Thyroid gland (tissue), 4 donors: ENCODE measurements at regions of chrX and their contacts with region 1.

Region 1: GRCh38 chrX:103918581-103919269 is 43.7 kb upstream of the TMSB15B start:
- DNase-seq: peak; percentile 28 to 38
- H3K4me3 ChIP-seq: peak overlapping the region in 2 of 3 donors; percentile 27
- H3K27ac ChIP-seq: peak overlapping the region in 2 of 3 donors; percentile 52 to 56
- H3K4me1 ChIP-seq: no peaks in the 10 kb centered on the region
- H3K27me3 ChIP-seq: no peaks in the 10 kb centered on the region
- CTCF ChIP-seq: no peak
- POLR2A ChIP-seq: no peak

Region 2: DNA sequence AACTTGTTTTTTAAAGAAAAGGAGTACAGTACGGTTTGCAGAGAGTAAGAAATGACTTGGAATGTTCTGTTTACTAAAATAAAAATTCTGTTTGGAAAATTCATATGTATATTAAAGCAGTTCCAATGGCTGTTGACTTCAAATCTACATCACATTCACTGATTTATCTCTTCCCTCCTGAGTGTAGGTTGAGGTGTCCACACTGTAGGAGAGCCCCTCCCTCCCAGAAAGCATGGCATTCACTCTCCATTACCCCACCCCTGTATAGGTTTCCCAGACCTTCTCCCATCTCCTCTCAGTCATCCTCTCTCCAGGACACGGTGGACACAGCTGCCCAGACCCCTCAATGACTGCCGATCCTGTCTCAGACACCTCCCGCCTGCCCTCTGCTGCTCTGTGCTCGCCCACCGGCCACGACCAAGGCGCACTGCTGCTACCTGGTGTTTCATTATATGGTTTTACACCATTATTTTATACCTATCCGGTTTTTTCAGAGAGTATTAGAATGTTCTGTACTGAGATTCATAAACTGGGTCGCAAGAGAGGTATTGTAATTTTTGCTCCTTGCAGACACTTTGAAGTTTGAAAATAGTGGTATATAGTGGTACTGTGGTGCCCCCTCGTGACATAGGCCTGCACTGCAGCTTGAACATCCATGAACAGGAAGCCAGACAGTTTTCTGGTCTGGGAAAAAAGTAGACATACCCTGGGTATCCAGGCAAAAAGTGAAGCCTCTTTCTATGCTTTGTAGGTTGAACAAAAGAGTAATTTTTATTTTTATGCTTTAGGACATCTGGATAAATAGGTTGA is 742.6 kb before region 1 on chrX:
- intact Hi-C with region 1: no loop called
- DNase-seq: peak; percentile 56 to 61
- H3K4me3 ChIP-seq: no peak overlapping the region
- H3K27ac ChIP-seq: no peak overlapping the region
- H3K4me1 ChIP-seq: no peaks in the 10 kb centered on the region
- H3K27me3 ChIP-seq: no peaks in the 10 kb centered on the region
- CTCF ChIP-seq: peak in 4 of 6 experiments; percentile 51 to 67 (median 62)
- POLR2A ChIP-seq: no peak

Region 3: DNA sequence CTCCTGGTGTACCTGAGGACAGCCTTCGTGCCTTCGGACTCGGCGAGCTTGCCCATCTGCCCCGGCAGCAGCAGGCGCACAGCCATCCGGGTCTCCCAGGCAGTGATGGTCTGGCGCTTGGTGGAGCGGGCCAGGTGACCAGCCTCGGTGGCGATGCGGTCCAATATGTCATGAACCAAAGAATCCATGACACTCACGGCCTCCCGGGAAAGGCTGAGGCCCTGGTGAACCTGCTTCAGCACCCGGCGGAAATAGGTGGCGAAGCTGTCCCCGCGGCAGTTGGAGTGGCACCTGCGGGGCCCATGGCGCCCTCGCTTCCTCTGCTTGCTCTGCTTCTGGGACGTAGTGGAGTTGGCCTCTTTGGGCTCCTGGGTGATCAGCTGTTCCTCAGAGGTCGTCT is 94.4 kb after region 1 on chrX:
- intact Hi-C with region 1: loop called (anchors 5 kb)
- DNase-seq: no peak
- H3K4me3 ChIP-seq: no peak overlapping the region
- H3K27ac ChIP-seq: no peak overlapping the region
- H3K4me1 ChIP-seq: no peaks in the 10 kb centered on the region
- H3K27me3 ChIP-seq: no peaks in the 10 kb centered on the region
- CTCF ChIP-seq: no peak
- POLR2A ChIP-seq: no peak